ENCODE measurements at regions of chr9 and their contacts with region 1.

Region 1: DNA sequence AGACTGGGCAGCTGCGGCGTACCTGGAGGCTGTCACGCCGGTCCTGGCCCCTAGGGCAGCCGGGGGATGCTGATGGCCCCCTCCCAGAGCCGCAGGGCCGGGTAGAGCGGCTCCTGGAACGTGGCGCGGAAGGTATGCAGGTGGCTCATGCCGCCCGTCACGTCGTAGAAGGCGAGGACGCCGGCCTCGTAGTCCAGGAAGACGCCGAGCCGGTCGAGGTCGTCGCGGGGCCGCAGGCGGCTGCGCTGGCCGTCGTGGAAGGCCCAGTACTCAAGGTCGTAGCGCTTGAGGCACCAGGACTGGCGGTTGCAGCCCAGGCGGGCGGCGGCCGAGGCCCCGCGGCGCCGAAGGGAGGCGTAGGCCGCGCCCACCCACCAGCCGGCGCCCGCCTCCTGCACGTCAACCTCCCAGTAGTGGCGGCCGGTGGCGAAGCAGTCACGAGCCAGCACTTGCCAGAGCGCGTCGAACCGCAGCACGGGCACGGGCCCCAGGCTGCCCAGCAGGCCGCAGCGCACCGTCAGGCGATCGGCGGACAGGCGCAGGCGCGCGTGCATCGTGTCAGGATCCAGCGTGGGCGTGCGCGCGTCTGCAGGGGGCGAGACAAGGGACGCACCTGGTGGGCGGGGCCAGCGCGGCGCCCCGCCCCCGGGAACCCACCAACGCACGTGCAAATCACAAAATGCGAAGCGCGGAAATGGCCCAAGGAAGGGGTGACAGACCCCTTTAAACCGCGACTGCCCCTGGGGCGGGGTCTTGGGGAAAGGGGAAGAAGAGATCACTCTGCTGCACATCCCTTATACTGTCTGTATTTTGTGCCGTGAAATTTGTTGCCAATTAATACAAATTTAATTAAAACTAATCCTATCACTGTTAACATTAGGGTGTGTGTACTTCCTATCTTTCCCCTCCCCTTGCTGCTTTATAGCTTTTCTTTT is 31.2 kb downstream of the NANS start:
- DNase-seq: peak; percentile 87
- ATAC-seq: peak; percentile 89
- H3K4me3 ChIP-seq: peak overlapping the region in 2 of 5 experiments; percentile 15 to 25
- H3K4me3 Mint-ChIP-seq: peak overlapping the region; percentile 80
- H3K27ac ChIP-seq: peak overlapping the region in 1 of 2 donors; percentile 8
- H3K27ac Mint-ChIP-seq: peak overlapping the region; percentile 69
- H3K4me1 ChIP-seq: peaks cover 0 to 8% of the 10 kb centered on the region in 2 donors
- H3K4me1 Mint-ChIP-seq: peaks cover 20% of the 10 kb centered on the region
- H3K27me3 ChIP-seq: no peaks in the 10 kb centered on the region
- H3K27me3 Mint-ChIP-seq: no peaks in the 10 kb centered on the region
- CTCF ChIP-seq: no peak

Region 2: GRCh38 chr9:98056269-98057137 is 31.2 kb before region 1 on chr9 and contains the start of gene NANS:
- CTCF ChIA-PET with region 1: no interaction called
- POLR2A ChIA-PET with region 1: no interaction called
- intact Hi-C with region 1: loop called (anchors 1 kb)
- DNase-seq: peak; percentile 92
- ATAC-seq: peak; percentile 97
- H3K4me3 ChIP-seq: peak within 1 kb of the TSS; percentile 76 to 85 (median 81)
- H3K4me3 Mint-ChIP-seq: peak within 1 kb of the TSS; percentile 99
- H3K27ac ChIP-seq: peak within 1 kb of the TSS; percentile 80 to 89
- H3K27ac Mint-ChIP-seq: peak within 1 kb of the TSS; percentile 95
- H3K4me1 ChIP-seq: peaks cover 8 to 18% of the 10 kb centered on the region in 2 donors
- H3K4me1 Mint-ChIP-seq: peaks cover 17% of the 10 kb centered on the region
- H3K27me3 ChIP-seq: no peaks in the 10 kb centered on the region
- H3K27me3 Mint-ChIP-seq: no peaks in the 10 kb centered on the region
- CTCF ChIP-seq: no peak
- total RNA-seq, gene NANS: 14.9 and 15.3 TPM in 2 replicates

Region 3: GRCh38 chr9:98101868-98102273 is 14.2 kb after region 1 on chr9:
- CTCF ChIA-PET with region 1: interaction called, 10 read pairs
- POLR2A ChIA-PET with region 1: interaction called, 6 read pairs
- intact Hi-C with region 1: loop called (anchors 1 kb)
- DNase-seq: peak; percentile 91
- ATAC-seq: peak; percentile 98
- H3K4me3 ChIP-seq: peak overlapping the region in 1 of 5 experiments; percentile 38
- H3K4me3 Mint-ChIP-seq: peak overlapping the region; percentile 68
- H3K27ac ChIP-seq: peak overlapping the region; percentile 66 to 74
- H3K27ac Mint-ChIP-seq: peak overlapping the region; percentile 81
- H3K4me1 ChIP-seq: peaks cover 82 to 87% of the 10 kb centered on the region in 2 donors
- H3K4me1 Mint-ChIP-seq: peaks cover 77% of the 10 kb centered on the region
- H3K27me3 ChIP-seq: no peaks in the 10 kb centered on the region
- H3K27me3 Mint-ChIP-seq: no peaks in the 10 kb centered on the region
- CTCF ChIP-seq: no peak

Region 4: DNA sequence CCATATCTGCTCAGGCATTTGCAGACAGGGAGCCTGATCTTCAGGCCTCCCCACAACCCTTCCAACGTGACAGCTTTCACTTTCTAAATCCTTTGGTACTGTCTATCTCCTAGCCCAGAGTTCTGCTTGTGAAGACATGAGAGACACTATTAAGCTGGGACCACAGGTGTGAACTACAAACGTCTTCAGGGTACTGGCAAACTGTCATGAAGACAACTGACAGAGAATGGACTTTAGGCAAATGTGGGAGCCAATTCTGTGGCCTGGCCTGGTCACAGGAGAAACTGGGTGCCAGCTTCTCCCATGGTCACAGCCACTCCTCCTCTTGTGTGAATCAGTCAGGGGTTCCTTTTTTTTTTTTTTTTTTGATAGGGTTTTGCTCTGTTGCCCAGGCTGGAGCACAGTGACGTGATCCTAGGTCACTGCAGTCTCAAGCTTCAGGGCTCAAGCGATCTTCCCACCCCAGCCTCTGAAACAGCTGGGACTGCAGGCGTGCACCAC is 20.9 kb after region 1 on chr9:
- CTCF ChIA-PET with region 1: interaction called, 7 read pairs
- POLR2A ChIA-PET with region 1: interaction called, 4 read pairs
- intact Hi-C with region 1: loop called (anchors 2 kb)
- DNase-seq: peak; percentile 93
- ATAC-seq: peak; percentile 83
- H3K4me3 ChIP-seq: peak overlapping the region in 1 of 5 experiments; percentile 18
- H3K4me3 Mint-ChIP-seq: peak overlapping the region; percentile 88
- H3K27ac ChIP-seq: peak overlapping the region; percentile 87 to 91
- H3K27ac Mint-ChIP-seq: peak overlapping the region; percentile 100
- H3K4me1 ChIP-seq: peaks cover 58 to 64% of the 10 kb centered on the region in 2 donors
- H3K4me1 Mint-ChIP-seq: peaks cover 60% of the 10 kb centered on the region
- H3K27me3 ChIP-seq: no peaks in the 10 kb centered on the region
- H3K27me3 Mint-ChIP-seq: no peaks in the 10 kb centered on the region
- CTCF ChIP-seq: no peak

Region 5: GRCh38 chr9:98118640-98119601 is 31.2 kb after region 1 on chr9 and contains the start of gene TRIM14:
- CTCF ChIA-PET with region 1: interaction called, 3 read pairs
- POLR2A ChIA-PET with region 1: interaction called, 5 read pairs
- intact Hi-C with region 1: loop called (anchors 5 kb)
- DNase-seq: peak; percentile 70
- ATAC-seq: peak; percentile 71
- H3K4me3 ChIP-seq: peak within 1 kb of the TSS; percentile 80 to 91 (median 89)
- H3K4me3 Mint-ChIP-seq: peak within 1 kb of the TSS; percentile 88
- H3K27ac ChIP-seq: peak within 1 kb of the TSS; percentile 69 to 78
- H3K27ac Mint-ChIP-seq: peak within 1 kb of the TSS; percentile 95
- H3K4me1 ChIP-seq: peaks cover 28 to 33% of the 10 kb centered on the region in 2 donors
- H3K4me1 Mint-ChIP-seq: peaks cover 45% of the 10 kb centered on the region
- H3K27me3 ChIP-seq: no peaks in the 10 kb centered on the region
- H3K27me3 Mint-ChIP-seq: no peaks in the 10 kb centered on the region
- CTCF ChIP-seq: no peak
- total RNA-seq, gene TRIM14: 22.4 and 22.5 TPM in 2 replicates

Region 6: GRCh38 chr9:98192503-98193335 is 105.0 kb after region 1 on chr9 and contains the start of gene CORO2A:
- CTCF ChIA-PET with region 1: interaction called, 4 read pairs
- POLR2A ChIA-PET with region 1: no interaction called
- intact Hi-C with region 1: loop called (anchors 2 kb)
- DNase-seq: peak; percentile 73
- ATAC-seq: peak; percentile 91
- H3K4me3 ChIP-seq: peak within 1 kb of the TSS; percentile 34 to 77 (median 67)
- H3K4me3 Mint-ChIP-seq: peak within 1 kb of the TSS; percentile 91
- H3K27ac ChIP-seq: no peak within 1 kb of the TSS
- H3K27ac Mint-ChIP-seq: peak within 1 kb of the TSS; percentile 71
- H3K4me1 ChIP-seq: peaks cover 8 to 18% of the 10 kb centered on the region in 2 donors
- H3K4me1 Mint-ChIP-seq: peaks cover 10% of the 10 kb centered on the region
- H3K27me3 ChIP-seq: peaks cover 0 to 12% (median 2%) of the 10 kb centered on the region in 4 experiments
- H3K27me3 Mint-ChIP-seq: no peaks in the 10 kb centered on the region
- CTCF ChIP-seq: peak; percentile 23
- total RNA-seq, gene CORO2A: 2.0 TPM in 2 replicates

Region 7: GRCh38 chr9:98207606-98208005 is 119.9 kb after region 1 on chr9:
- CTCF ChIA-PET with region 1: interaction called, 8 read pairs
- POLR2A ChIA-PET with region 1: no interaction called
- intact Hi-C with region 1: loop called (anchors 5 kb)
- DNase-seq: no peak
- ATAC-seq: no peak
- H3K4me3 ChIP-seq: no peak overlapping the region
- H3K4me3 Mint-ChIP-seq: no peak overlapping the region
- H3K27ac ChIP-seq: no peak overlapping the region
- H3K27ac Mint-ChIP-seq: no peak overlapping the region
- H3K4me1 ChIP-seq: peaks cover 4 to 10% of the 10 kb centered on the region in 2 donors
- H3K4me1 Mint-ChIP-seq: peaks cover 5% of the 10 kb centered on the region
- H3K27me3 ChIP-seq: no peaks in the 10 kb centered on the region
- H3K27me3 Mint-ChIP-seq: no peaks in the 10 kb centered on the region
- CTCF ChIP-seq: no peak